ENCODE measurements at regions of chr12 and their contacts with region 1.

Region 1: DNA sequence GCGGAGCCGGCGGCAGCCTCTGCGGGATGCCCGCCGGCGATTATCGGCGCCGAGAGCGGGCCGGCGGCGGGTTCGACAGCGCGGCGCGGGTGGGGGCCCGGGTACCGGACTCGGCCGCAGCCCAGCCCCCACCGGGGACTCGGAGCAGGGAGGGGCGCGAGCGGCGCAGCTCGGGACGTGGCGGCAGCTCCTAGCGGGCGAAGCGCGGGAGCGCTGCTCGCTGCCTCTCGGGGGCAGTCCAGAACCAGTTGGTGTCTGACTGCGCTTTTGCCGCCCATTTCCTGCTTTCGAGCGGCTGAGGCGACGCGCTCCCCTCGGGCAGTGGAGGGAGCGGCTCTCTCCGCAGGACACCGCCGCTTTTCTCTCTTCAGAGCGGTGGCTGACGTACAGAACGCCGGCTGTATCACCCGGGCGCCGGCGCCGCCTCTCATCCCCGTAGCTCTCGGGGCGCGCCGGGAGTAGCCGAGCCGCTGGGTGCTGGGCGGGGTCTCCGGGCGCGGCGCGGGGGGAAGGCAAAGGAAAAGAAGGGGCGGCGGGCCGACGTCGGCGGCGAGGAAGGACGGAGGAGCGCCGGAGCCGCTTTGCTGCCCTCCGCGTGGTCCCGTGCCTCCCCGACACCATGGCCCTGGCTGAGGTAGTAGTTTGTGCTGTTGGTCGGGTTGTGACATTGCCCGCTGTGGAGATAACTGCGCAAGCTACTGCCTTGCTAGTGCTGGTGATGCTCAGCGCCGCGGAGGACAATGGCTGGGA is 136.6 kb downstream of the MON2 start:
- DNase-seq: peak; percentile 68 to 89 (median 84)
- ATAC-seq: peak; percentile 75
- H3K4me3 ChIP-seq: peak overlapping the region; percentile 93
- H3K4me3 Mint-ChIP-seq: peak overlapping the region; percentile 77 to 97 (median 92)
- H3K27ac ChIP-seq: peak overlapping the region; percentile 99
- H3K27ac Mint-ChIP-seq: peak overlapping the region; percentile 99 to 100 (median 99)
- H3K4me1 ChIP-seq: peaks cover 12% of the 10 kb centered on the region in 2 donors
- H3K4me1 Mint-ChIP-seq: peaks cover 10 to 43% (median 29%) of the 10 kb centered on the region in 7 donors
- H3K27me3 ChIP-seq: no peaks in the 10 kb centered on the region
- H3K27me3 Mint-ChIP-seq: no peaks in the 10 kb centered on the region

Region 2: GRCh38 chr12:62466594-62467491 is 136.4 kb before region 1 on chr12 and contains the start of gene MON2:
- CTCF ChIA-PET with region 1: no interaction called
- POLR2A ChIA-PET with region 1: interaction called, 18 read pairs
- intact Hi-C with region 1: loop called (anchors 1 kb)
- DNase-seq: peak; percentile 79 to 89 (median 84)
- ATAC-seq: peak; percentile 98
- H3K4me3 ChIP-seq: peak within 1 kb of the TSS; percentile 90
- H3K4me3 Mint-ChIP-seq: peak within 1 kb of the TSS; percentile 85 to 99 (median 94)
- H3K27ac ChIP-seq: peak within 1 kb of the TSS; percentile 88
- H3K27ac Mint-ChIP-seq: peak within 1 kb of the TSS; percentile 86 to 98 (median 96)
- H3K4me1 ChIP-seq: peaks cover 8 to 17% of the 10 kb centered on the region in 2 donors
- H3K4me1 Mint-ChIP-seq: peaks cover 12 to 30% (median 21%) of the 10 kb centered on the region in 7 donors
- H3K27me3 ChIP-seq: peaks cover 0 to 4% of the 10 kb centered on the region in 2 donors
- H3K27me3 Mint-ChIP-seq: peaks cover 0 to 4% (median 3%) of the 10 kb centered on the region in 5 donors
- total RNA-seq, gene MON2: 50.0 to 96.3 (median 76.0) TPM

Region 3: GRCh38 chr12:62631471-62632410 is 28.5 kb after region 1 on chr12:
- CTCF ChIA-PET with region 1: no interaction called
- POLR2A ChIA-PET with region 1: interaction called, 3 read pairs
- intact Hi-C with region 1: loop called (anchors 2 kb)
- DNase-seq: peak in 6 of 9 donors; percentile 8 to 18 (median 12)
- ATAC-seq: peak; percentile 65
- H3K4me3 ChIP-seq: peak overlapping the region; percentile 45
- H3K4me3 Mint-ChIP-seq: peak overlapping the region; percentile 77 to 90 (median 84)
- H3K27ac ChIP-seq: no peak overlapping the region
- H3K27ac Mint-ChIP-seq: no peak overlapping the region
- H3K4me1 ChIP-seq: peaks cover 0 to 9% of the 10 kb centered on the region in 2 donors
- H3K4me1 Mint-ChIP-seq: peaks cover 4 to 17% (median 9%) of the 10 kb centered on the region in 7 donors
- H3K27me3 ChIP-seq: peaks cover 7 to 11% of the 10 kb centered on the region in 2 donors
- H3K27me3 Mint-ChIP-seq: peaks cover 69 to 91% (median 81%) of the 10 kb centered on the region in 5 donors

Region 4: GRCh38 chr12:62714774-62715721 is 111.8 kb after region 1 on chr12:
- CTCF ChIA-PET with region 1: no interaction called
- POLR2A ChIA-PET with region 1: no interaction called
- intact Hi-C with region 1: loop called in 1 of 2 experiments (anchors 10 kb)
- DNase-seq: no peak
- ATAC-seq: no peak
- H3K4me3 ChIP-seq: no peak overlapping the region
- H3K4me3 Mint-ChIP-seq: no peak overlapping the region
- H3K27ac ChIP-seq: no peak overlapping the region
- H3K27ac Mint-ChIP-seq: peak overlapping the region in 1 of 9 donors; percentile 63
- H3K4me1 ChIP-seq: no peaks in the 10 kb centered on the region
- H3K4me1 Mint-ChIP-seq: no peaks in the 10 kb centered on the region
- H3K27me3 ChIP-seq: no peaks in the 10 kb centered on the region
- H3K27me3 Mint-ChIP-seq: peaks cover 0 to 5% (median 0%) of the 10 kb centered on the region in 5 donors

Region 5: GRCh38 chr12:62799126-62799736 is 196.0 kb after region 1 on chr12:
- CTCF ChIA-PET with region 1: interaction called, 7 read pairs
- POLR2A ChIA-PET with region 1: no interaction called
- intact Hi-C with region 1: loop called (anchors 1 kb)
- DNase-seq: peak in 8 of 9 donors; percentile 5 to 53 (median 40)
- ATAC-seq: peak; percentile 81
- H3K4me3 ChIP-seq: no peak overlapping the region
- H3K4me3 Mint-ChIP-seq: no peak overlapping the region
- H3K27ac ChIP-seq: no peak overlapping the region
- H3K27ac Mint-ChIP-seq: no peak overlapping the region
- H3K4me1 ChIP-seq: no peaks in the 10 kb centered on the region
- H3K4me1 Mint-ChIP-seq: no peaks in the 10 kb centered on the region
- H3K27me3 ChIP-seq: no peaks in the 10 kb centered on the region
- H3K27me3 Mint-ChIP-seq: peaks cover 0 to 14% (median 0%) of the 10 kb centered on the region in 5 donors

Region 6: GRCh38 chr12:64222009-64222765 is 1619.0 kb after region 1 on chr12 and contains the start of gene KICS2:
- CTCF ChIA-PET with region 1: no interaction called
- POLR2A ChIA-PET with region 1: no interaction called
- intact Hi-C with region 1: loop called (anchors 2 to 5 kb)
- DNase-seq: peak; percentile 89 to 95 (median 93)
- ATAC-seq: peak; percentile 96
- H3K4me3 ChIP-seq: peak within 1 kb of the TSS; percentile 87
- H3K4me3 Mint-ChIP-seq: peak within 1 kb of the TSS; percentile 86 to 100 (median 98)
- H3K27ac ChIP-seq: peak within 1 kb of the TSS; percentile 92
- H3K27ac Mint-ChIP-seq: peak within 1 kb of the TSS; percentile 94 to 100 (median 98)
- H3K4me1 ChIP-seq: peaks cover 8 to 19% of the 10 kb centered on the region in 2 donors
- H3K4me1 Mint-ChIP-seq: peaks cover 17 to 51% (median 41%) of the 10 kb centered on the region in 7 donors
- H3K27me3 ChIP-seq: no peaks in the 10 kb centered on the region
- H3K27me3 Mint-ChIP-seq: peaks cover 0 to 21% (median 8%) of the 10 kb centered on the region in 5 donors
- total RNA-seq, gene KICS2: 11.7 to 26.9 (median 19.5) TPM

Region 7: GRCh38 chr12:64451687-64452558 is 1848.7 kb after region 1 on chr12 and contains the start of gene TBK1:
- CTCF ChIA-PET with region 1: no interaction called
- POLR2A ChIA-PET with region 1: no interaction called
- intact Hi-C with region 1: loop called in 1 of 2 experiments (anchors 10 kb)
- DNase-seq: peak in 8 of 9 donors; percentile 21 to 80 (median 34)
- ATAC-seq: peak; percentile 78
- H3K4me3 ChIP-seq: peak within 1 kb of the TSS; percentile 61
- H3K4me3 Mint-ChIP-seq: peak within 1 kb of the TSS; percentile 90 to 99 (median 94)
- H3K27ac ChIP-seq: peak within 1 kb of the TSS; percentile 74
- H3K27ac Mint-ChIP-seq: peak within 1 kb of the TSS; percentile 86 to 95 (median 94)
- H3K4me1 ChIP-seq: peaks cover 19 to 24% of the 10 kb centered on the region in 2 donors
- H3K4me1 Mint-ChIP-seq: peaks cover 20 to 54% (median 41%) of the 10 kb centered on the region in 7 donors
- H3K27me3 ChIP-seq: no peaks in the 10 kb centered on the region
- H3K27me3 Mint-ChIP-seq: no peaks in the 10 kb centered on the region
- total RNA-seq, gene TBK1: 9.0 to 34.0 (median 12.1) TPM

Measured in naive thymus-derived CD4-positive, alpha-beta T cell (primary cell).